Cardiac septum (tissue), 1 donor: ENCODE measurements at regions of chr5 and their contacts with region 1.

Region 1: GRCh38 chr5:174418928-174419796 is 305.2 kb upstream of the MSX2 start:
- DNase-seq: peak; percentile 87

Region 2: GRCh38 chr5:174188295-174188694 is 230.9 kb before region 1 on chr5:
- intact Hi-C with region 1: no loop called
- DNase-seq: peak; percentile 70

Region 3: GRCh38 chr5:174311531-174312269 is 107.5 kb before region 1 on chr5:
- intact Hi-C with region 1: no loop called
- DNase-seq: no peak

Region 4: GRCh38 chr5:174735498-174736330 is 316.6 kb after region 1 on chr5:
- intact Hi-C with region 1: loop called (anchors 2 kb)
- DNase-seq: no peak

Region 5: GRCh38 chr5:174793684-174794328 is 374.6 kb after region 1 on chr5:
- intact Hi-C with region 1: loop called (anchors 5 kb)
- DNase-seq: no peak

Region 6: GRCh38 chr5:174935854-174936474 is 516.8 kb after region 1 on chr5:
- intact Hi-C with region 1: loop called (anchors 2 kb)
- DNase-seq: no peak

Region 7: GRCh38 chr5:175035883-175036528 is 616.8 kb after region 1 on chr5:
- intact Hi-C with region 1: no loop called
- DNase-seq: no peak